ENCODE measurements at regions of chr9 and their contacts with region 1.

Region 1: GRCh38 chr9:114911167-114911821 is 19.1 kb downstream of the TNFSF8 start:
- DNase-seq: no peak

Region 2: DNA sequence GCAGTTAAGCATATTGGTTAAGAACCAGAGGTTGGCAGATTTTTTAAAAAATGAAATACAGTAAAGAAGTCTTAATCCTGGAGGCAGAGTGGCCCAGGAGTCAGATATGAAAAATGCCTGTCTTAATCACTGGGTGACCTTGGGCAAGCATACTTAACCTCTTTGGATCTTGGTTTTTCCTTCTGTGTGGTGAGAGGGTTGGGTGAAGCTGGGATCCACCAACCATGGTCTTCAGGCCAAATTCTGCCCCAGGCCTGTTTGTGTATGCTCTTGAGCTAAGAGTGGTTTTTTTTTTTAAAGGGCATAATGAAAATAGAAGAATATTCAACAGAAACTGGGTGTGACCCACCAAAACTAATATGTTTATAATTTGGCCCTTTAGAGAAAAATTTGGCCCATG is 209.3 kb before region 1 on chr9:
- intact Hi-C with region 1: no loop called
- DNase-seq: no peak

Region 3: GRCh38 chr9:114738581-114739316 is 172.5 kb before region 1 on chr9:
- intact Hi-C with region 1: loop called (anchors 5 kb)
- DNase-seq: peak; percentile 89

Region 4: DNA sequence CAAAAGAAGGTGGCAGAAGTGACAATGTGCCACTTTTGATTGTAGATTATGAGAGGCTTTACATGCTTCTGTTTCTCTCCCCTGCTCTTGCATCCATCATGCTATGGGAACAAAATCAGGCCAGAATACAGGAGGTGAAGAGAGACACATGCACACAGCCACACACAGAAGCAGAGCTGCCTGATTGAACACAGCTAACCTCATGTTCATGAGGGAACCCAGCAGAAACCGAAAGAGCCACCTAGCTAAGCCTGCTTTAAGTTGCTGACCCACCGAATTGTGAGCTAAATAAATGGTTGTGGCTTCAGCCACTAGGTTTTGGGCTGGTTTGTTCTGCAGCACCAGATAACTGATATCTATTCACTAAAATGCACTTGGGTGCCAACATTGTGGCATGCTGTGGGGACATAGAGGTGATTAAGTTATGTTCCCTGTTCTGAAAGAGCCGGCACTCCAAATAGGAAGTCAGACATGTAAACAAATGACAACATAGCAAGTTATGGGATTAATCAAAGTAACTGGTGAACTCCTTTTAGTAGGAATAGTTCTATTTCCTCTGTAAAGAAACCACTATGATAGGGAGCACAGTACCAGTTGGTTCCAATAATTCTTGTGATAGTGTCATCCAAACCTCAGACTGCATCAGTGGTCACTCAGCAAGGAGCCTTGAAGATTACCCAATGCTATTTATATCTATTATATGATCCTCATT is 300.3 kb after region 1 on chr9:
- intact Hi-C with region 1: no loop called
- DNase-seq: no peak